ENCODE measurements at regions of chr16 and their contacts with region 1.

Region 1: DNA sequence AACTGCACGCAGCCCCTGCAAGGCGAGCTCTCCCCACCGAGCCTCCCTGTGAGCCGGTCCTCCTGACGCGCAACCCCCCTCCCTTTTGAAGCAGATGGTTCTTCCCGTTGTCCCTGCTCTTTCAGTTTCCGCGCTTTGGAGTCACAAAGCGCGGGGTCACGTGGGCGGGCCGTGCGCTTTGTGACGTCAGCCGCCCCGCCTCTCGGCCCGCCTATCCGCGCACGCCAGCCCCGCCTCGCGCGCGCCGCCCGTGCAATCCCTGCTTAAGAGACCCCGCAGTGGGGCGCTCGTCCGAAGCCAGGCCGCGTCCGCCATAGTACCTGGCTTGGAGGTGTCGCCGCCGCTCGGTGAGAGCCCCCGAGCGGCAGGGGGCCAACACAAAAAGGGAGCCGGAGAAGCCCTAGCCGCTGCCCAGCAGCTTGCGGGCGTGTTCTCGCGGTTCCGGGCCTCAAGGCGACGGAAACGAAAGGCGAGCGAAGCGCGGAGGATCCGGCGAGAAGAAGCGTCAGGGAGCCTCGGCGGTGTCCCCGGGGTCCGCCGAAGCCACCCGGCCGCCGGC is at the start of gene RBBP6:
- DNase-seq: peak; percentile 92
- H3K4me3 Mint-ChIP-seq: peak within 1 kb of the TSS; percentile 100
- H3K27ac Mint-ChIP-seq: peak within 1 kb of the TSS; percentile 100
- H3K4me1 Mint-ChIP-seq: peaks cover 30% of the 10 kb centered on the region
- H3K27me3 Mint-ChIP-seq: no peaks in the 10 kb centered on the region
- total RNA-seq, gene RBBP6: 67.0 and 68.4 TPM in 2 replicates

Region 2: DNA sequence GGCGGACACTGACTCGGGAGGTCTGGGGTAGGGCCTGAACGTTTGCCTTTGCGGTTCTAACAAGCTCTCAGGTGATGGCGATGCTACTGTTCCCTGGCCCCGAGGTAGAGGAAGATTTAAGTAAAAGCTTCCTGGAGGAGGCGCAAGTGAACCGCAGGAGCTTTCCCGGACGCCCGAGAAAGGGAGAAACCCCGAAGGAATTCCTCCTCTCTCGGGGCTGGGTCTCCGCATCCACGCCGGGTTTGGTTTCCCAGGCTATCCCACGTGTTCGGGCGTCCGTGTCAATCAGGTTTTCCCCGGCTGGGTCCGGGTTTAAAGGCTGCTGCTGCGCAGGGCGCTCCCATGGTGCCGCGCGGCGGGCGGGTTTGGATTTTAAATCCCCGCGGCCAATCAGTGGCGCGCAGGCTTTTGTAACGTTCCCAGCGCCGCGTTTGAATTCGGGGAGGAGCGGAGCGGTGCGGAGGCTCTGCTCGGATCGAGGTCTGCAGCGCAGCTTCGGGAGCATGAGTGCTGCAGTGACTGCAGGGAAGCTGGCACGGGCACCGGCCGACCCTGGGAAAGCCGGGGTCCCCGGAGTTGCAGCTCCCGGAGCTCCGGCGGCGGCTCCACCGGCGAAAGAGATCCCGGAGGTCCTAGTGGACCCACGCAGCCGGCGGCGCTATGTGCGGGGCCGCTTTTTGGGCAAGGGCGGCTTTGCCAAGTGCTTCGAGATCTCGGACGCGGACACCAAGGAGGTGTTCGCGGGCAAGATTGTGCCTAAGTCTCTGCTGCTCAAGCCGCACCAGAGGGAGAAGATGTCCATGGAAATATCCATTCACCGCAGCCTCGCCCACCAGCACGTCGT is 860.7 kb before region 1 on chr16 and contains the start of gene PLK1:
- intact Hi-C with region 1: loop called (anchors 10 kb)
- DNase-seq: peak; percentile 81
- H3K4me3 Mint-ChIP-seq: peak within 1 kb of the TSS; percentile 94
- H3K27ac Mint-ChIP-seq: peak within 1 kb of the TSS; percentile 84
- H3K4me1 Mint-ChIP-seq: peaks cover 34% of the 10 kb centered on the region
- H3K27me3 Mint-ChIP-seq: no peaks in the 10 kb centered on the region
- total RNA-seq, gene PLK1: 45.2 and 54.7 TPM in 2 replicates

Region 3: GRCh38 chr16:24504472-24505345 is 34.7 kb before region 1 on chr16:
- intact Hi-C with region 1: no loop called
- DNase-seq: peak; percentile 50
- H3K4me3 Mint-ChIP-seq: no peak overlapping the region
- H3K27ac Mint-ChIP-seq: no peak overlapping the region
- H3K4me1 Mint-ChIP-seq: peaks cover 8% of the 10 kb centered on the region
- H3K27me3 Mint-ChIP-seq: peaks cover 8% of the 10 kb centered on the region

Region 4: GRCh38 chr16:24516900-24517669 is 22.3 kb before region 1 on chr16:
- intact Hi-C with region 1: loop called (anchors 1 kb)
- DNase-seq: peak; percentile 62
- H3K4me3 Mint-ChIP-seq: no peak overlapping the region
- H3K27ac Mint-ChIP-seq: no peak overlapping the region
- H3K4me1 Mint-ChIP-seq: peaks cover 16% of the 10 kb centered on the region
- H3K27me3 Mint-ChIP-seq: peaks cover 9% of the 10 kb centered on the region

Region 5: DNA sequence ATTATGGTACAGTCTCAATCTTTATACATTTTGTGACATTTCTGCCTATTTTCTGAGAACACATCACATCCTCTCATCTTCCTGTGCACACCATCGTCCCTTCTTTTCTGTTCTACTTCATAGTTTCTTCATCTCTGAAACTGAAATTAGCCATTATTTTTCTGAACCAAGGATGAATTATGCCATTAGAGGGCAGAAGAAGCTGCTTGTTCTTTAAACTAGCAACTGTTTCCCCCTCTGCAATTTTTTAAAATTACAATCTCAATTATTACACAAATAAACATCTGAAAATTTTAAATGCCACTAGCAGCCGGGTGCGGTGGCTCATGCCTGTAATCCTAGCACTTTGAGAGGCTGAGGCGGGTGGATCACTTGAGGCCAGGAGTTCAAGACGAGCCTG is 41.3 kb after region 1 on chr16:
- intact Hi-C with region 1: no loop called
- DNase-seq: no peak
- H3K4me3 Mint-ChIP-seq: no peak overlapping the region
- H3K27ac Mint-ChIP-seq: no peak overlapping the region
- H3K4me1 Mint-ChIP-seq: peaks cover 9% of the 10 kb centered on the region
- H3K27me3 Mint-ChIP-seq: peaks cover 13% of the 10 kb centered on the region

Region 6: GRCh38 chr16:24729362-24729984 is 190.1 kb after region 1 on chr16 and contains the start of gene TNRC6A:
- intact Hi-C with region 1: loop called (anchors 1 kb)
- DNase-seq: peak; percentile 76
- H3K4me3 Mint-ChIP-seq: peak within 1 kb of the TSS; percentile 92
- H3K27ac Mint-ChIP-seq: peak within 1 kb of the TSS; percentile 96
- H3K4me1 Mint-ChIP-seq: peaks cover 42% of the 10 kb centered on the region
- H3K27me3 Mint-ChIP-seq: no peaks in the 10 kb centered on the region
- total RNA-seq, gene TNRC6A: 57.8 and 60.9 TPM in 2 replicates

Region 7: DNA sequence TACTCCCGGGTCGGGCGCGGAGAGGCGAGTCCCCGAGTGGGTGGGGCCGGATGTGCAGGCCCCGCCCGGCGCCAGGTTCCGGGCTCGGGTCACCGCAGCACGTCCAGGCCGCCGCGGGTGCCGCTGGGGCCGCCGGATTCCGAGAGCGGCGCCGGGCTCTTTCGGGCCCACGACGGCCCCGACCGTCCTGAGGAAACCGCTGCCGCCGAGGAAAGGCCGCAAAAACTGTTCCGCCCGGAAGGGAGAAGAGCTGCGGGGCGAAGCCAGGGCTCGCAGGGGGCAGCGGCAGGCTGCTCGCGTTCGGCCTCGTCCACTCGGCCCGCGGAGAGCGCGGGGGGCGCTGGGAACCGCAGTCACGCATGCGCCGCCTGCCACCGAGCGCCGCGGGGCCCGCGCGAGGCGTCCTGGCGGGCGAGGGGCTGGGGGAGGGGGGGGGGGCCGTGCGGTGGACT is 718.2 kb after region 1 on chr16 and contains the start of gene ZKSCAN2:
- intact Hi-C with region 1: loop called (anchors 10 kb)
- DNase-seq: peak; percentile 83
- H3K4me3 Mint-ChIP-seq: peak within 1 kb of the TSS; percentile 91
- H3K27ac Mint-ChIP-seq: peak within 1 kb of the TSS; percentile 97
- H3K4me1 Mint-ChIP-seq: peaks cover 53% of the 10 kb centered on the region
- H3K27me3 Mint-ChIP-seq: peaks cover 2% of the 10 kb centered on the region
- total RNA-seq, gene ZKSCAN2: 6.1 and 6.4 TPM in 2 replicates